Sigmoid colon (tissue), 7 donors: ENCODE measurements at regions of chr9 and their contacts with region 1.

Region 1: GRCh38 chr9:37903647-37904444 is at the start of gene SLC25A51:
- DNase-seq: peak; percentile 97
- H3K4me3 ChIP-seq: peak within 1 kb of the TSS; percentile 68 to 92 (median 92)
- H3K27ac ChIP-seq: peak within 1 kb of the TSS; percentile 83 to 95 (median 92)
- H3K4me1 ChIP-seq: peaks cover 0 to 28% (median 24%) of the 10 kb centered on the region in 4 donors
- H3K27me3 ChIP-seq: no peaks in the 10 kb centered on the region
- CTCF ChIP-seq: peak; percentile 85 to 98 (median 93)
- EP300 ChIP-seq: no peak
- POLR2A ChIP-seq: peak; percentile 9 to 54
- total RNA-seq, gene SLC25A51: 19.3 to 31.0 (median 27.3) TPM

Region 2: GRCh38 chr9:37575921-37576721 is 327.7 kb before region 1 on chr9 and contains the start of gene FBXO10:
- intact Hi-C with region 1: loop called (anchors 10 kb)
- DNase-seq: peak; percentile 88
- H3K4me3 ChIP-seq: peak within 1 kb of the TSS; percentile 59 to 90 (median 75)
- H3K27ac ChIP-seq: peak within 1 kb of the TSS; percentile 85 to 97 (median 96)
- H3K4me1 ChIP-seq: peaks cover 0 to 37% (median 29%) of the 10 kb centered on the region in 4 donors
- H3K27me3 ChIP-seq: no peaks in the 10 kb centered on the region
- CTCF ChIP-seq: no peak
- EP300 ChIP-seq: peak in 1 of 4 donors; percentile 6
- POLR2A ChIP-seq: peak in 1 of 2 donors; percentile 32
- total RNA-seq, gene FBXO10: 14.8 to 19.4 (median 16.3) TPM

Region 3: DNA sequence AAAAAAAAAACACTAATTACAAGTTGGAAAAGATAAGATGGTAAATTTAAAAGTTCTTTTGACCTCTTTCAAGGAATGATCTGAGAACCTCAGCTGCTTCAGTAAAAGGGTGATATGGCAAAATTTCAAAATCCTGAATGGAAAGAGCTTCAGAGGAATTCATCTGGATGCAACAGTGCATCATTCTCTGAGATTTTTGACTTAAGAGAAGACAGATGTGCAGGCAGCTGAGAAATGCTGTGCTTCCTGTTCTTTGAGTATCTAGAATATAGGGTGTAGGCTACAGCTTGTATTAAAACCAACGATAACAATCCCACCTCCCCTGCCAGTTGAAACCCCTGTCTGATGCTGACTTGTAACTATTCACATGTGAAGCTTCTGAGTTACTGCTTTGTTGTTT is 246.9 kb before region 1 on chr9:
- intact Hi-C with region 1: no loop called
- DNase-seq: no peak
- H3K4me3 ChIP-seq: no peak overlapping the region
- H3K27ac ChIP-seq: no peak overlapping the region
- H3K4me1 ChIP-seq: peaks cover 0 to under 1% (median 0%) of the 10 kb centered on the region in 4 donors
- H3K27me3 ChIP-seq: peaks cover 0 to 41% (median 20%) of the 10 kb centered on the region in 3 donors
- CTCF ChIP-seq: no peak
- EP300 ChIP-seq: no peak
- POLR2A ChIP-seq: no peak

Region 4: GRCh38 chr9:37706290-37706689 is 197.6 kb before region 1 on chr9:
- intact Hi-C with region 1: no loop called
- DNase-seq: no peak
- H3K4me3 ChIP-seq: no peak overlapping the region
- H3K27ac ChIP-seq: no peak overlapping the region
- H3K4me1 ChIP-seq: no peaks in the 10 kb centered on the region
- H3K27me3 ChIP-seq: no peaks in the 10 kb centered on the region
- CTCF ChIP-seq: no peak
- EP300 ChIP-seq: no peak
- POLR2A ChIP-seq: no peak